ENCODE measurements at regions of chr10 and their contacts with region 1.

Region 1: GRCh38 chr10:91163269-91163868 is 57.1 kb upstream of the PCGF5 start:
- DNase-seq: peak; percentile 92

Region 2: GRCh38 chr10:89653410-89653869 is 1509.9 kb before region 1 on chr10:
- intact Hi-C with region 1: no loop called
- DNase-seq: no peak

Region 3: DNA sequence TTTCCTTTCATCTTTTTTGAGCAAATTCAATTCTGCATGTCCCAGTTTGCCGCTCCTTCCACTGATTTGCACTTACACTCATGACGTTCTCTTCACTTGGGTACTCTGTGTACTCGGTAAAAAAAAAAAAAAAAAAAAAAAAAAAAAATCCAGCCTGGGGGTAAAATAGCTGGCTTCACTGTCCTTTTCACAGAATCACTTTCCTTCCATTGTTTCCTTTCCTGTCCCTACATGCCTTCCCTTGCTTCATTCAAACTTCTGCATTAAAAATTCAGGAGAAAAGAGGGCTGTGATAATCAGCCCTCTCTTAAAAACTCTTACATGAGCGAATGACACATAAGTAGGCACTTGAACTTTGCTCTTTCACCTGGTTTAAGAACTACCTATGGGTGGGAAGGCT is 251.2 kb before region 1 on chr10:
- intact Hi-C with region 1: loop called in 1 of 2 experiments (anchors 10 kb)
- DNase-seq: no peak

Region 4: DNA sequence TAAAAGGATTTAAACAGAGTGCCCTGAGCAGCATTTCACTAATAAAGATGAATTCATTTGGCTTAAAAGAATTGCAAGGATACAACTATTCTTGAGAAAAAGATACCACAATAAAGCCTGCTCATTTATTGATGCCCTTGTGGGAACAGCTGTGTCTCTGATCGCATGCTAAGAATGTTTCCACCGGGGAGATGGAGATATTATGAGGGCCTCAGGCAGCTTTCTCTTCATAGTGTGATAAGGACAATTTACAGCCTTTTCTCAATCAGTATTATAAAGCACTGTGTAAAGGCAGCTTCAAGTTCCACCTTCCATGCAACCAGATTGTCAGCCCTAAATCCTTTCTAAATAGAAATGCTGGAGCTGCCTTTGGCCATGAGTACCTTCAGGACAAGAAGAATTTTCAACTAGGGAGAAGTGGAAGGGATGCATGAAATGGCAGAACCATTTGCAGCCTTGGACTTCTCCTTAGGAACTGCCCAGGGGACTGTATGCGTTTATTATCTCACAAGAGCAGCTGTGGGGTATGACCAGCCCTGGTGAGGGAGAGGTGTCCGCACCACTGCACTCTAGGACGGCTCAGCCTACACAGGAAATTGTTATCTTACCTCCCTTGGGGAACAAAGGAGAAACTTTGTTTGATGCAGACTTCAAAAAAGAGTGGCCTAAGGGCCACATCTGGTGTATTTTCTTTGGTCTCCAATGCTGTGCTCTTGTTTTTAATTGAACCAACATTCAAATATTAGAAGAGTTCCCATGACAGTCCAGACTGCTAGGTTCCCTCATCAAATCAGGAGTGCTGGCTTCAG is 59.8 kb before region 1 on chr10:
- intact Hi-C with region 1: loop called in 1 of 2 experiments (anchors 10 kb)
- DNase-seq: no peak

Region 5: DNA sequence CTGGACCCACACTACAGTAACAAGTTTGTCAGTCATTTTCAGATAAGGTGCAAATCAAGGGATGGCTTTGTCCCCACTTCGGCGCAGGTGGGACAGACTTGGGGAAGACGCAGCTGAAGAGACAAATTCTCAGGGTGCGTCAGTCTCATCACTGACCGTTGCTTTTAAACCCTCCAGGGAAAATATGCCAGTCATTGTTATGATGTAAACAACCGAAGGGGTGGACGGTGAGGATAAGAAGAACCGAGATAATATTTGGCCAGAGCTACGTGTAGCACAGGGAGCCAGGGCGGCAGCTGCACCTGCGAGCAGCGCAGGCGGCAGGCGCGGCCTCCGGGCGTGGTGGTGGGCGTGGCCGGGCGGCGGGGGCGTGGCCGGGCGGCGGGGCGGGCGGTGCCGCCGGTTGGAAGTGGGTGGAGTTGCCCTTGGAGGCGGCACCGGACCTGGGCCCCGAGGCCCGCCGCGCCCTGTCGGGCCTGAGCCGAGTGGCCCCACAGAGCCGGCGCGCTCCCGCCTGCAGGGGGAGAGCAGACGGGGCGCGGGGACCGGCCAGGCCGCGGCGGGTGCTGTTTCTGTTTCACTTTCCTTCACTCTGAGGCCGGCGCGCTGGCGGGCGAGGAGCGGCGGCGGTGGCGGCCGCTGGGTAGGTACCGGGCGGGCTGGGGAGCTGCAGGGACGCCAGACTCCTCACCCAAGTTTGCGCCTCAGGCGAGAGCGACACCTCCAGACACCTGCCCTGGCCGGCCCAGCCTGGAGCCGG is 57.0 kb after region 1 on chr10 and contains the start of gene PCGF5:
- intact Hi-C with region 1: loop called in 1 of 2 experiments (anchors 5 kb)
- DNase-seq: peak; percentile 97
- total RNA-seq, gene PCGF5: 60.6 to 100 TPM

Region 6: GRCh38 chr10:91935884-91936283 is 772.5 kb after region 1 on chr10:
- intact Hi-C with region 1: no loop called
- DNase-seq: no peak